Left ventricle myocardium superior (tissue), 1 donor: ENCODE measurements at regions of chr16 and their contacts with region 1.

Region 1: GRCh38 chr16:83835586-83836566 is 28.1 kb downstream of the HSBP1 start:
- DNase-seq: no peak
- ATAC-seq: no peak

Region 2: DNA sequence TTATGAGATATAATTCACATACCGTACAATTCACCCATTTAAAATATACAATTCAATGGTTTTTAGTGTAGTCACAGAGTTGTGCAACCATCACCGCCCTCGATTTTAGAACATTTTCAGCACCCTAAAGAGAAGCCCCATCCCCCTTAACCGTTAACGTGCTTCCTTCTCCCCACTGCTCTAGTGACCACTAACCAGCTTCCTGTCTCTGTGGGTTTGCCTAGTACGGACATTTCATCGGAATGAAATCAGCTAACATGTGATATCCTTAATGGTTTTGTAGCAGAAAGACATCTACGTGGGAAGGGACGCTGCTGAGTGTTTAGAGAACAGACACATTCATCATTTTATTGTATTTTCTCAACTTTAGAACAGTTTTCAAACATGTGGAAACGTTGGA is 108.9 kb before region 1 on chr16:
- intact Hi-C with region 1: no loop called
- DNase-seq: no peak
- ATAC-seq: no peak

Region 3: GRCh38 chr16:83769397-83770008 is 66.4 kb before region 1 on chr16:
- intact Hi-C with region 1: no loop called
- DNase-seq: no peak
- ATAC-seq: peak; percentile 39

Region 4: DNA sequence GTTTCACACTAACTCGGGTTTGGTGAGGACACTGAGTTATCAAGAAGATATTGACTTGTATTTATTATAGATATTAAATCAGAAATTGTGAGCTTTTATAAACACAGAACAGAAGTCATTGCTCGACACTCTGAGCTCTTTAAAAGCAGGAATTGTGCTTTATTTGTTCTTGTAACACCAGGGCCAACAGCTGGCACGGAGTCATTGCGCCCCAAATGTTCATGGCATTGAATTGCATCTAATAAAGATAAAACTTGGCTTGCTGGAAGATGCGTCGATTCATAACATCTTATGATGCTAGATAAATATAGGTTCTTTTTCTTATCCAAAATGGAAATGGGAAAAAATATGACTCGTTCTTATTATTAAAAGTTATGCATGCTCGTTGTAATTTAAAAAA is 51.2 kb after region 1 on chr16:
- intact Hi-C with region 1: loop called (anchors 10 kb)
- DNase-seq: no peak
- ATAC-seq: no peak